ENCODE measurements at regions of chr6 and their contacts with region 1.

Region 1: GRCh38 chr6:21593412-21593926 is at the start of gene SOX4:
- DNase-seq: peak; percentile 96
- H3K4me3 ChIP-seq: peak within 1 kb of the TSS; percentile 60 to 94 (median 74)
- H3K27ac ChIP-seq: peak within 1 kb of the TSS; percentile 87 to 98 (median 94)
- H3K4me1 ChIP-seq: peaks cover 0 to 19% (median 14%) of the 10 kb centered on the region in 4 donors
- H3K27me3 ChIP-seq: no peaks in the 10 kb centered on the region
- CTCF ChIP-seq: no peak
- EP300 ChIP-seq: no peak
- POLR2A ChIP-seq: peak; percentile 31 to 71
- total RNA-seq, gene SOX4: 3.9 to 8.8 (median 6.5) TPM

Region 2: DNA sequence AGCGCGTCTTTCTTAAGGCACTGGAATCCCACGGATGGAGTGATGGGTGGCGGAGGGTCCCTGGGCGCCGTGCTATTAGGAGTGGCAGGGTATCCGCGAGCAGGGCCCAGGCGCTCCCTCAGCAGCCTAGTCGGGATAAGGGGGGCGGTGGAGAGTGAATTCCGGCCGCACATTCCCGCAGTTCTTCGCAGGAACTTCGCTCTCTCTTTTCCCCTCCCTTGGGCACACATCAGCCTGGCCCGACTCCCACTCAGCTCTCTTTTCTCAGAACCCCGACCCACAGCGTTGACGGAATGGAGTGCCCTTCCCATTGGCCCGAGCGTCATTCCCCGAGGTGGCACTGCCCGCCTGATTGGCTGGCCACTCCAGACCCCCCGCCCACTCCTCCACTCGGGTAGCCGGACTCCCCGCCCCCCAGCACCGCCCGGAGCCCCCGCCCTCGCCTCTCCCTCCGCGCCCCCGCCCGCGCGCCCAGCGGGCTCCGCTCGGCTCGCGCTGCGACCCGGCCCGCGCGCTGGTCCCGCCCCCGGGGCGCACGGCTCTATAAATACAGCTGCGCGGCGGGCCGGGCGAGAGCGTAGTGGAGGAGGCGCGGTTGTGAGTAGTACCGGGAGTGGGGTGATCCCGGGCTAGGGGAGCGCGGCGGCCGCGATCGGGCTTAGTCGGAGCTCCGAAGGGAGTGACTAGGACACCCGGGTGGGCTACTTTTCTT is 1756.5 kb before region 1 on chr6 and contains the start of gene ID4:
- intact Hi-C with region 1: loop called (anchors 10 kb)
- DNase-seq: peak; percentile 98
- H3K4me3 ChIP-seq: peak within 1 kb of the TSS; percentile 61 to 88 (median 81)
- H3K27ac ChIP-seq: peak within 1 kb of the TSS; percentile 91 to 95 (median 92)
- H3K4me1 ChIP-seq: peaks cover 0 to 18% (median 7%) of the 10 kb centered on the region in 4 donors
- H3K27me3 ChIP-seq: peaks cover 0 to 6% (median 0%) of the 10 kb centered on the region in 3 donors
- CTCF ChIP-seq: no peak
- EP300 ChIP-seq: no peak
- POLR2A ChIP-seq: peak; percentile 79 to 89
- total RNA-seq, gene ID4: 5.3 to 9.1 (median 7.1) TPM

Region 3: DNA sequence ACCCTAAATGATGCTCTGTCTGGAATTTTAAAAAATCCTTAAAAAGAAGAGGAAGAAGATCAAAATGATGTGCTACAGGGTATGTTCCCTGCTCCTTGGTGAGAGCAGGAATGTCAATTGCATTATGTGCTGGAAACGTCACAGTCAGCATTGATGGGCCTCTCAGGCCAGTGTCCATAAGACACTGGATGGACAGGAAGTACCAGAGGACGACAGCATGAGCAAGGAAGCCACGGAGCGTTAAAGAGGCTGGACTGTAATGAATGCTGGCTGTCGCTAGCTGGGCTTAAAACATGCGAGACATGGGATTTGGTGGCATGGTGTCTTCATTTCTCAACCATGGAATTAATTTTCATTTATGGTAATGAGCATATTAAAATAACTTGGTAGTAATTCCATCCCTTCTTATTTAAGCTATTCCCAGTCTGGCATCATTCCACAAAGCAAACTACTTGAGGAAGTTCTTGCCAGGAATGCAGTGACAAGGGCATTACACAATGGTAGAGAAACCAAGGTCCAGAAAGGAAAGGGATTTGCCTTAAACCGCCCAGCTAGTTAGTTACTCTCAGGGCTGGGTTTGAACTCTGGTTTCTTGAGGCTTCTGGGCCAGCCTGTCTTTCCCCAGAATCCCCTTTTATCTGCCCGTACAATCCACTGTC is 166.5 kb before region 1 on chr6:
- intact Hi-C with region 1: no loop called
- DNase-seq: no peak
- H3K4me3 ChIP-seq: no peak overlapping the region
- H3K27ac ChIP-seq: no peak overlapping the region
- H3K4me1 ChIP-seq: no peaks in the 10 kb centered on the region
- H3K27me3 ChIP-seq: no peaks in the 10 kb centered on the region
- CTCF ChIP-seq: no peak
- EP300 ChIP-seq: no peak
- POLR2A ChIP-seq: no peak

Region 4: DNA sequence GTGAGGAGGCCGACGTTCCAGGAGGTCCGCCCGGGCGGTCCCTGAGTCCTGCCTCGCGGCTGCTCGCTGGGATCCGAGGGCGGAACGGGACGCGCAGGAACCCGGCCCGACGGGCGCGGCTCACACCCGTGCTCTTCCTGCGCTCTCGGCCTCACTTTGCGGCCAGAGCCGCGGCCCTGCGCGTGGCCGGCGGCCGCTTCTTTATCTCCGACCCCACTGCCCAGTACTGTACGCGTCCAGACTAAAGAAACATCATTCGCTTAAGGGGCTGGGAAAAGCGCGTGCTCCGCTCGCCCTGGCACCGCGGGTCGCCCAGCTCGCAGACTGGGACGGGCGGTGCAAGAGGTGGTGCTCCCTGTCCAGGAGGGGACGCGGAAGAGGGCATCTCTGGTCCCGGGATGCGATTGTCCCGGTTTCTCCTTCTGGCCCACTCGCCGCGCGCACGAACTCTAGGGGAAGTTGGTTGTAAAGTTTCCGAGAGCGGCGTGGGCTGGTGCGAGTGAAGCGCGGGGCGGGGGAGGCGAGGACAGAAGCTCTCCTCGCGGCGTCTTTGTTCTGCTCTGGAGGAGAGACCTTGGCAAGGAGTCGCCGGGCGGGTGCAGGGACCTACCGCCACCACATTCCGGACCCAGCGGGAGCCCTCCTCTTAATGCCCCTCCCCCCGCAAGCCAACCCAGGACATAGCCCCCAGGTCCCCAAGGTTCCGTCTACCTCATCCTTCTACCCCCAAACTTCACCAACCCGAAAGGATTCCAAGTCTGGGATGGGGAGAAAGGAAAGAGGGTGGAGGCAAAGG is 71.0 kb after region 1 on chr6:
- intact Hi-C with region 1: loop called (anchors 2 kb)
- DNase-seq: peak; percentile 74
- H3K4me3 ChIP-seq: peak overlapping the region; percentile 42 to 73 (median 64)
- H3K27ac ChIP-seq: peak overlapping the region; percentile 19 to 81 (median 62)
- H3K4me1 ChIP-seq: peaks cover 0 to 47% (median 16%) of the 10 kb centered on the region in 4 donors
- H3K27me3 ChIP-seq: peaks cover 0 to 10% (median 0%) of the 10 kb centered on the region in 3 donors
- CTCF ChIP-seq: no peak
- EP300 ChIP-seq: no peak
- POLR2A ChIP-seq: no peak

Region 5: DNA sequence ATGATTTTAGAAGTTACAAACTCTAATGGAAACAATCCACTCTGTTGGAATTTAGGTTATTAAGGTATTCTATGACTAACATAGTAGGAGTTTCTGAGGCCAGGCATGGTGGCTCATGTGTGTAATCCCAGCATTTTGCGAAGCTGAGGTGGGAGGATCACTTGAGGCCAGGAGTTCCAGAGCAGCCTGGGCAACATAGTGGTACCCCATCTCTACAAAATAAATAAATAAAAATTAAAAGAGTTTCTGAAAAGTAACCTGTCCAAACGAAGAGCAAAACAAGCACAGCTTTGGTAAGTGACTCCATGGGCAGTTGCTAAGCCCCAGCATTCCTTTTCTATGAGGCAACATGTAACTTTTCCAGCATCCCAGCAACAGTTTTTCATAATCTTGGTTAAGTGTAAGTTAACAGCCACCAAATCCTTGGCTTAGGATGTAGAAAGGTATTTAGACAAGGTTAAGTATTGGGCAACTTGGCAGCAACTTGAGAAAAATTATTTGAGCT is 86.3 kb after region 1 on chr6:
- intact Hi-C with region 1: no loop called
- DNase-seq: no peak
- H3K4me3 ChIP-seq: no peak overlapping the region
- H3K27ac ChIP-seq: peak overlapping the region; percentile 37 to 77 (median 54)
- H3K4me1 ChIP-seq: peaks cover 0 to 14% (median 11%) of the 10 kb centered on the region in 4 donors
- H3K27me3 ChIP-seq: no peaks in the 10 kb centered on the region
- CTCF ChIP-seq: no peak
- EP300 ChIP-seq: no peak
- POLR2A ChIP-seq: no peak

Region 6: GRCh38 chr6:21808045-21808470 is 214.6 kb after region 1 on chr6:
- intact Hi-C with region 1: loop called (anchors 5 kb)
- DNase-seq: no peak
- H3K4me3 ChIP-seq: peak overlapping the region in 1 of 4 donors; percentile 19
- H3K27ac ChIP-seq: peak overlapping the region; percentile 38 to 82 (median 71)
- H3K4me1 ChIP-seq: peaks cover 0 to 41% (median 22%) of the 10 kb centered on the region in 4 donors
- H3K27me3 ChIP-seq: no peaks in the 10 kb centered on the region
- CTCF ChIP-seq: no peak
- EP300 ChIP-seq: no peak
- POLR2A ChIP-seq: no peak

Region 7: GRCh38 chr6:21953831-21954801 is 360.6 kb after region 1 on chr6:
- intact Hi-C with region 1: loop called (anchors 5 kb)
- DNase-seq: no peak
- H3K4me3 ChIP-seq: peak overlapping the region in 2 of 4 donors; percentile 22 to 35
- H3K27ac ChIP-seq: peak overlapping the region; percentile 6 to 82 (median 73)
- H3K4me1 ChIP-seq: peaks cover 0 to 38% (median 30%) of the 10 kb centered on the region in 4 donors
- H3K27me3 ChIP-seq: no peaks in the 10 kb centered on the region
- CTCF ChIP-seq: no peak
- EP300 ChIP-seq: no peak
- POLR2A ChIP-seq: no peak

Region 8: GRCh38 chr6:22737331-22737730 is 1143.9 kb after region 1 on chr6:
- intact Hi-C with region 1: loop called (anchors 5 kb)
- DNase-seq: peak; percentile 65
- H3K4me3 ChIP-seq: no peak overlapping the region
- H3K27ac ChIP-seq: peak overlapping the region in 3 of 4 donors; percentile 37 to 70 (median 50)
- H3K4me1 ChIP-seq: peaks cover 0 to 20% (median 11%) of the 10 kb centered on the region in 4 donors
- H3K27me3 ChIP-seq: no peaks in the 10 kb centered on the region
- CTCF ChIP-seq: peak in 3 of 4 experiments; percentile 8 to 53 (median 9)
- EP300 ChIP-seq: no peak
- POLR2A ChIP-seq: no peak